ENCODE measurements at regions of chr13 and their contacts with region 1.

Region 1: DNA sequence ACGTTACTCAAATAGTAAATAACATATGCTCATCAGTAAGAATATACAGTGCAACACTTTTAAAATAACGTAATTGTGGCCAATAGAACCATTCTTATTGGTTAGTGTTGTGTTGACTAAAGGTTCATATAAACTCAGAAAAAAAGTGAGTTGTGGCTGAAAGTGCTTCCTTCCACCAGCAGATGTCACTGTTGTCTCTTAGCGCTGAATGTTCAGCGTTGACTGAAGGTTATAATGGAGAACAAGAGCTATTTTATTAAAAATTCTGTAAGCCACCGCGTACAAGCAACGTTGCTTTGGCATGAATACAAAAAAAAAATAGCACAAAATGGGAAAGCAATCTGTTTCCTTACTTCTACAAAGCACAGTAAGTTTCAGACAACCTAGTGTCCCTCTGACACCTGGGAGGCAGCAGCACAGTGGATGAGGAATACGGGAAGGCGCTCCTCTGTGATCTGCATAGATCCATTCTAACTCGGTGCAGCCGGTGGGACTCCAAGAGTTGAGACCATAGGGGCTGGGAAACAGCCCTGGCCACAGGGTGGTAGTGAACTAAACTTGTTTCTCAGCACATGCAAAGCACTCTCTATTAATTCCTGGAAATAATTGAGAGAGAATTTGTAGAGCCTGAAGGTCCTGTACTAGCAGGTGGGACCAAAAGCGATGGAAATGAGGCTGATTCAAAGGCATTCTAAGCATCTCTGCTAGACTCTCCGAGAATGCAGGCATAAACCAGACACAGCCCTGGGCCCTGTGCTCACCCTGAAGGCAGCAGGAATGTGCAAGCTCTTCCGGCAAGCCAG is 24.0 kb upstream of the OXGR1 start:
- DNase-seq: peak; percentile 52
- ATAC-seq: peak; percentile 95
- H3K4me3 ChIP-seq: no peak overlapping the region
- H3K27ac ChIP-seq: no peak overlapping the region
- H3K4me1 ChIP-seq: peaks cover 0 to 4% of the 10 kb centered on the region in 2 experiments; a peak in 1 of 4 replicates
- H3K27me3 ChIP-seq: no peaks in the 10 kb centered on the region
- CTCF ChIP-seq: peak; percentile 62 to 92 (median 88); a peak in 5 of 6 replicates
- POLR2A ChIP-seq: no peak
- RAD21 ChIP-seq: peak; percentile 82

Region 2: GRCh38 chr13:96575423-96576320 is 442.6 kb before region 1 on chr13:
- CTCF ChIA-PET with region 1: no interaction called
- POLR2A ChIA-PET with region 1: no interaction called
- RAD21 ChIA-PET with region 1: no interaction called
- intact Hi-C with region 1: no loop called
- DNase-seq: no peak
- ATAC-seq: no peak
- H3K4me3 ChIP-seq: no peak overlapping the region
- H3K27ac ChIP-seq: no peak overlapping the region
- H3K4me1 ChIP-seq: no peaks in the 10 kb centered on the region
- H3K27me3 ChIP-seq: no peaks in the 10 kb centered on the region; the same call in 1 of the 2 replicates
- CTCF ChIP-seq: no peak
- POLR2A ChIP-seq: no peak
- RAD21 ChIP-seq: no peak

Region 3: GRCh38 chr13:96984051-96984508 is 34.1 kb before region 1 on chr13:
- CTCF ChIA-PET with region 1: interaction called, 13 read pairs
- POLR2A ChIA-PET with region 1: no interaction called
- RAD21 ChIA-PET with region 1: no interaction called
- intact Hi-C with region 1: no loop called
- DNase-seq: no peak
- ATAC-seq: peak; percentile 93
- H3K4me3 ChIP-seq: peak overlapping the region; percentile 42 to 55
- H3K27ac ChIP-seq: no peak overlapping the region
- H3K4me1 ChIP-seq: peaks cover 0 to 4% of the 10 kb centered on the region in 2 experiments; a peak in 1 of 4 replicates
- H3K27me3 ChIP-seq: no peaks in the 10 kb centered on the region
- CTCF ChIP-seq: peak; percentile 22 to 47 (median 47); a peak in 5 of 6 replicates
- POLR2A ChIP-seq: no peak
- RAD21 ChIP-seq: peak; percentile 20; the same call in 1 of the 2 replicates

Region 4: GRCh38 chr13:97359181-97360057 is 341.2 kb after region 1 on chr13:
- CTCF ChIA-PET with region 1: interaction called, 13 read pairs
- POLR2A ChIA-PET with region 1: no interaction called
- RAD21 ChIA-PET with region 1: interaction called in 1 of 2 experiments, 3 read pairs
- intact Hi-C with region 1: no loop called
- DNase-seq: peak; percentile 44
- ATAC-seq: peak; percentile 94
- H3K4me3 ChIP-seq: no peak overlapping the region
- H3K27ac ChIP-seq: peak overlapping the region; percentile 28; the same call in 1 of the 2 replicates
- H3K4me1 ChIP-seq: no peaks in the 10 kb centered on the region
- H3K27me3 ChIP-seq: no peaks in the 10 kb centered on the region
- CTCF ChIP-seq: peak; percentile 71 to 94 (median 72); a peak in 5 of 6 replicates
- POLR2A ChIP-seq: no peak
- RAD21 ChIP-seq: peak; percentile 87

Region 5: GRCh38 chr13:97506511-97506910 is 488.3 kb after region 1 on chr13:
- CTCF ChIA-PET with region 1: no interaction called
- POLR2A ChIA-PET with region 1: no interaction called
- RAD21 ChIA-PET with region 1: no interaction called
- intact Hi-C with region 1: loop called (anchors 10 kb)
- DNase-seq: no peak
- ATAC-seq: no peak
- H3K4me3 ChIP-seq: no peak overlapping the region
- H3K27ac ChIP-seq: no peak overlapping the region
- H3K4me1 ChIP-seq: no peaks in the 10 kb centered on the region
- H3K27me3 ChIP-seq: 0 out of 2 replicates have a peak, but pooled peaks cover 6% of the 10 kb centered on the region
- CTCF ChIP-seq: no peak
- POLR2A ChIP-seq: no peak
- RAD21 ChIP-seq: no peak

Region 6: DNA sequence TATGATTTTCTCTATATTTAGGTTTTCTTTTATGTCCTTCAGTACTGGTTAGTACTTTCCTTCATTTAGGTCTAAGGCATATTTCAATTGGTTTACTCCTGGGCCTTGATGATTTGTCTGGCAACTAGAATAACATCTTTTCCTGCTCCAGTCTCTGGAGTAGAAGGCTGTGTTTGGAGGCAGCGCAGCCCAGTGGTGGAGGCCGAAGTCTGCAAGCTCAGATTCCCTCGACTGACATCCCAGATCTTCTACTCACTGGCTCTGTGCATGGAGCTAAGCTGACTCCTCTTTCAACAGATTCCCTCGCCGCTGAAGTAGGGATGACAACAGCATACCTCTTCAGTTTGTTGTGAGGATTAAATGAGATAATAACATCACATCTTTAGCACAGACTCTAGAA is 556.7 kb after region 1 on chr13:
- CTCF ChIA-PET with region 1: interaction called, 6 read pairs
- POLR2A ChIA-PET with region 1: no interaction called
- RAD21 ChIA-PET with region 1: no interaction called
- intact Hi-C with region 1: loop called (anchors 5 kb)
- DNase-seq: peak; percentile 31
- ATAC-seq: peak; percentile 91
- H3K4me3 ChIP-seq: no peak overlapping the region
- H3K27ac ChIP-seq: no peak overlapping the region
- H3K4me1 ChIP-seq: no peaks in the 10 kb centered on the region
- H3K27me3 ChIP-seq: no peaks in the 10 kb centered on the region
- CTCF ChIP-seq: peak; percentile 34 to 72 (median 62); a peak in 5 of 6 replicates
- POLR2A ChIP-seq: no peak
- RAD21 ChIP-seq: peak; percentile 77

Region 7: DNA sequence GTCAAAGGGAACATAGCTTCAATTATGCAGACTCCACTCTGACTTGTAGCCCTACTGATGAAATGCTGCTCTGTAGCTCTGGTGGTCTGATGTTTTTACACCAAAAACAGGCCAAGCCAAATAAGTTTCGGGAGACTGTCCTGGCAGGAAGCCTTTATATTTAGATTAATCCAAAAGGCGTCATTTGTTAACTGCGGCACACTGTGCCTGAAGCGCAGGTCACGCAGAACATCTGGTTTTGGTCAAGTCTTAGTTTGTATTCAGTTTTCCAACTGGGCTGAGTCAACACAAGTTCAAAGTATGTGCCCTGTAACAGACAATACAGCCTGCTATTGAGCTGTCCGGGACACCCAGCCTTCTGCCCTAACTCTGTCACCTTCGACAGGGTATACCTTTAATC is 780.6 kb after region 1 on chr13:
- CTCF ChIA-PET with region 1: interaction called, 4 read pairs
- POLR2A ChIA-PET with region 1: no interaction called
- RAD21 ChIA-PET with region 1: no interaction called
- intact Hi-C with region 1: loop called (anchors 1 kb)
- DNase-seq: no peak
- ATAC-seq: no peak
- H3K4me3 ChIP-seq: no peak overlapping the region
- H3K27ac ChIP-seq: no peak overlapping the region
- H3K4me1 ChIP-seq: no peaks in the 10 kb centered on the region
- H3K27me3 ChIP-seq: no peaks in the 10 kb centered on the region
- CTCF ChIP-seq: no peak
- POLR2A ChIP-seq: no peak
- RAD21 ChIP-seq: no peak

Measured in HCT116 (cell line).